Colonic mucosa (tissue), 4 donors: ENCODE measurements at regions of chr1 and their contacts with region 1.

Region 1: GRCh38 chr1:10494754-10495474 is 20.2 kb downstream of the PEX14 start:
- DNase-seq: peak; percentile 87
- H3K4me3 ChIP-seq: peak overlapping the region; percentile 22
- H3K27ac ChIP-seq: peak overlapping the region; percentile 29
- H3K4me1 ChIP-seq: no peaks in the 10 kb centered on the region
- H3K27me3 ChIP-seq: no peaks in the 10 kb centered on the region
- CTCF ChIP-seq: peak; percentile 94

Region 2: GRCh38 chr1:10378081-10378841 is 116.7 kb before region 1 on chr1:
- intact Hi-C with region 1: loop called (anchors 5 kb)
- DNase-seq: no peak
- H3K4me3 ChIP-seq: no peak overlapping the region
- H3K27ac ChIP-seq: no peak overlapping the region
- H3K4me1 ChIP-seq: no peaks in the 10 kb centered on the region
- H3K27me3 ChIP-seq: no peaks in the 10 kb centered on the region
- CTCF ChIP-seq: no peak

Region 3: DNA sequence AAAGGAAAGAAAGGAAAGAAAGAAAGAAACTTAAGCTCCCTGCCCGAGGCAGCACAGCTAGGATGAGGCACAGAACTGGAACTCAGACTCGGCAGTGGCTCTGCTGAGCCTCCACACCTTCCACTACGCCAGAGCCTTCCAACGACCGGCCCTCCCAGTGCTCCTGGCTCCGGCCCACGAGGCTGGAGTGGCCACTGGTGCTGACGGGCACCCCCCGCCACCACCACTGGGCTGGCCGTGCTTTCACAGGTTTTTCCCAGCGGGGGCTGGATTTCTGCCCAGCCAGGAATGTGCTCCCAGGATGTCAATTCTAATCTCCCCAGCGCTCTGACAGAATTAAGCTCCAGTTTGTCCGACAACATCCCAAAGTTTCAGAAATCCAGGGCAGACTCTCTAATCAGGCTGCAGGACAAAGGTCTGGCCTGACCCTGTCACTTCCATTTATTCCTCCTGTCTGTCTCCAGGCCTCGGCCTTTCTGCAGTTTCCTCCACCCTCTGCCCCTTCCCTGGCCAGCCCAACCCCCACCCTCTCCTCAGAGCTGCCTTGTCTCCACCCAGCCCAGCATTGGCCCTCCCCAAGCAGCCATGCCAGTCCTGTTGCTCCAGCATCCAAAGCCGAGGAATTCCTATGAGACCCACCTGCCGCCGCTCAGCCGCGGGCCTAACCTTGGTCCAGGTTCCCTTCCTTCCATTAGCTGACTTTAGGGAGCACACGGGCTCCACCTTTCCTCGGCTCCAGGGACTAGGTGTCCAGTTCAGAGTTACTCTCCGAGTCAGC is 219.6 kb after region 1 on chr1:
- intact Hi-C with region 1: no loop called
- DNase-seq: no peak
- H3K4me3 ChIP-seq: no peak overlapping the region
- H3K27ac ChIP-seq: no peak overlapping the region
- H3K4me1 ChIP-seq: peaks cover 8% of the 10 kb centered on the region
- H3K27me3 ChIP-seq: no peaks in the 10 kb centered on the region
- CTCF ChIP-seq: no peak